Dendritic cell treated with granulocyte-macrophage colony-stimulating factor and Interleukin-4, amounts not matched to agents 40 ng/mL and 50 ng/mL, for 4 days (primary cell): ENCODE measurements at regions of chr1 and their contacts with region 1.

Region 1: GRCh38 chr1:198771563-198772153 is 132.8 kb downstream of the PTPRC start:
- H3K4me3 Mint-ChIP-seq: no peak overlapping the region
- H3K27ac Mint-ChIP-seq: no peak overlapping the region
- H3K4me1 Mint-ChIP-seq: peaks cover 26% of the 10 kb centered on the region
- H3K27me3 Mint-ChIP-seq: no peaks in the 10 kb centered on the region

Region 2: GRCh38 chr1:198633675-198634121 is 138.0 kb before region 1 on chr1:
- intact Hi-C with region 1: no loop called
- H3K4me3 Mint-ChIP-seq: peak overlapping the region; percentile 44
- H3K27ac Mint-ChIP-seq: peak overlapping the region; percentile 93
- H3K4me1 Mint-ChIP-seq: peaks cover 49% of the 10 kb centered on the region
- H3K27me3 Mint-ChIP-seq: no peaks in the 10 kb centered on the region

Region 3: GRCh38 chr1:198925567-198925966 is 153.9 kb after region 1 on chr1:
- intact Hi-C with region 1: loop called (anchors 2 kb)
- H3K4me3 Mint-ChIP-seq: no peak overlapping the region
- H3K27ac Mint-ChIP-seq: no peak overlapping the region
- H3K4me1 Mint-ChIP-seq: peaks cover 21% of the 10 kb centered on the region
- H3K27me3 Mint-ChIP-seq: no peaks in the 10 kb centered on the region

Region 4: GRCh38 chr1:199098468-199098867 is 326.8 kb after region 1 on chr1:
- intact Hi-C with region 1: loop called (anchors 5 kb)
- H3K4me3 Mint-ChIP-seq: no peak overlapping the region
- H3K27ac Mint-ChIP-seq: no peak overlapping the region
- H3K4me1 Mint-ChIP-seq: peaks cover 46% of the 10 kb centered on the region
- H3K27me3 Mint-ChIP-seq: peaks cover 4% of the 10 kb centered on the region

Region 5: DNA sequence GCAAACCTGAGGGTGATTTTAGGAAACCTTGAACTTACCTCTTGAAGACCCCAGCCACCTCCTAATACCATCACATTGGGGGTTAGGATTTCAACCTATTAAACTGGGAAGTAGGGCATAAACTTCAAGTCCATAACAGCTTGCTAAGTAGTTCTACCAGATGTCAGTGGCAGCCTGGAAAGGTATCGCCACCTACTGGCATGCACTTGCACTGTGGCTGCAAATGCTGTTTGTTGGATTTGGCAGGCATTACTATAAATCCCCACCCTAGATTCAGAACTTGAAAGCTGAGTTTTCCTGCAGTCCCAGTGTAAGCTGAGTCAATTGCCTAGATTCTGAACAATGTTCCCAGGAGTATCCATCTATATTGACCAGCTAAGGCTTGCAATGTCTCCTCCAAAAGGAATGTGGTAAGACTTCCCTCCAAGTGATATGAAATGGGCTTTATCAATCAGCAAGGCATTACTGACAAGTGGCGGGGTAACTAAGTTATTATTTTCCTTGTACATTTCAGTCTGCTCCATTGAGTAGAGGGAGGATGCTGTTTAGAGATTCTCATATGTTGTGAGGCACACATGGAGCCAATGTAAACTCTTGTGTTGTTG is 341.7 kb after region 1 on chr1:
- intact Hi-C with region 1: loop called (anchors 5 kb)
- H3K4me3 Mint-ChIP-seq: no peak overlapping the region
- H3K27ac Mint-ChIP-seq: no peak overlapping the region
- H3K4me1 Mint-ChIP-seq: peaks cover 9% of the 10 kb centered on the region
- H3K27me3 Mint-ChIP-seq: no peaks in the 10 kb centered on the region

Region 6: DNA sequence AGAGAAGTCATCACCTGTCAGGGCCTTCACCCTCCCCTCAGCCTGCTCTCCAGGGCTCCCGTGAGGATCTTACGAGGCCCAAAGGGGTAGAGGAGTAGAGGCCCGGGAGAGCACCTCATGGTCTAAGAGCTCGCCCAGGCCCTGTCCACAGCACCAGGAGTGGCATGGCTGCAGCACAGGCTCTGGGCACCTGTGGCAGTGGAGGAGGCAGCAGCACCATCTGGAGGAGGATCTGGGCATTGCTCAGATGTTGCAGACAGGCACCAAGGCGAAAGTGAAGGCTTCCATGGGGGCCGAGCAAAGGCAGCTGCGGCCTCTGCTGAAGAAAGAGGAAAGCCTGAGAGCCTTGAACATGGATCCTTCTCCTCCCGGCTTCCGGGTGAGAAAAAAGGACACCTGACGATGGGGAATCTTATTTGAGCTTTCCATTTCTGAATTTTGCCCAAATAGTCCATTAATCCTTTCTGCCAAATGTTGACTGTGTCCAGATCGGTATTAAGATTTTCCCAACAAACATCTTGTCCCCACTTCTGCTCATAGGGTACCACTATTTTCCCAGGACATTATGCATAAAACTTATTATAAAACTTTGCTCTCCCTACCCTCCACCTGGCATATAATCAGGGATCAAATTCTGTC is 471.9 kb after region 1 on chr1:
- intact Hi-C with region 1: loop called (anchors 5 kb)
- H3K4me3 Mint-ChIP-seq: no peak overlapping the region
- H3K27ac Mint-ChIP-seq: no peak overlapping the region
- H3K4me1 Mint-ChIP-seq: peaks cover 20% of the 10 kb centered on the region
- H3K27me3 Mint-ChIP-seq: no peaks in the 10 kb centered on the region

Region 7: DNA sequence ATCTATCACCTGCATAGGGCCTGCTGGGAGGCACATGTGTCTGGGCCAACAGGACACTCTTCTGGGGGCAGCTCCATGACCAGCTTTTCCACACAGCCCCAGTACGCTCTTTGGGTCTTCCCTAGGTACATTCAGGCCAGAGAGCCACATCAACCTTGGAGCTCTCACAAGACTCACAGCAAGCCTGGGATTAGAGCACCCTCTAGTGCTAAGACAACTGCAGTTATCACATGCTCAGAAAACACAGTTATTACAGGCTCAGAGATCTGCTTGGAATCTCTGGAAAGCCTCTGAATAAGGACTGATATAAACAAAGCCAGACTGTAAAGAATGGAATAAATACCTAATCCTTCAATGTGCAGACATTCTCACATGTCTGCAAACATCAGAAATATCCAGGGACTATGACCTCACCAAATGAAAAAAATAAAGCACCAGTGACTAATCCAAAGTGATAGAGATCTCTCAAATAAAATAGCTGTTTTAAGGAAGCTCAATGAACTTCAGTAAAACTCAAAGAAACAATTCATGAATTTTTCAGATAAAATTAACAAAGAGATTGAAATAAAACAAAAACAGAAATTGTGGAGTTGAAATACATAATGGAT is 692.0 kb after region 1 on chr1:
- intact Hi-C with region 1: loop called (anchors 10 kb)
- H3K4me3 Mint-ChIP-seq: no peak overlapping the region
- H3K27ac Mint-ChIP-seq: no peak overlapping the region
- H3K4me1 Mint-ChIP-seq: peaks cover 6% of the 10 kb centered on the region
- H3K27me3 Mint-ChIP-seq: no peaks in the 10 kb centered on the region